Heart left ventricle (tissue), 16 donors: ENCODE measurements at regions of chr14 and their contacts with region 1.

Region 1: DNA sequence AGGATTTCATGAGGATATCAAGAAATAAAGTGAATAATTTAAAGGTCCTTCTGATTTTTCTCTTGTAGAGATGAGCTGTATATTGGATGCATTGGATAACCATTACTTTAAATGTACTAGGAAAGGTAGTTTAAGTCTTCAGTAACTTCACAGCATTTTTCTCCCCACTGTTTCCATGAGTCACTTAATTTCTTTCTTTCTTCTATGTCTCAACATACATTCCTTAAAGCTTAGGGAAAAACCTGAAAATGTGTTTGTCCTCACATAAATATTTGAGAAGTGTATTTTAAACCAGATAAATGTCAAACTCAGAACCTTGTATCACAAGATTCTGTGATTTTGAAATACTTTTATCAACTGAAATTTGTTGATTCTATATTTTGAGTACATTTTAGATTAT is 1970.2 kb upstream of the FLRT2 start:
- DNase-seq: no peak
- ATAC-seq: no peak
- H3K4me3 ChIP-seq: no peak overlapping the region
- H3K27ac ChIP-seq: no peak overlapping the region
- H3K4me1 ChIP-seq: no peaks in the 10 kb centered on the region
- H3K27me3 ChIP-seq: no peaks in the 10 kb centered on the region
- CTCF ChIP-seq: no peak
- POLR2A ChIP-seq: no peak

Region 2: GRCh38 chr14:83594874-83595273 is 35.2 kb after region 1 on chr14:
- intact Hi-C with region 1: loop called in 1 of 10 experiments (anchors 2 kb)
- DNase-seq: no peak
- ATAC-seq: no peak
- H3K4me3 ChIP-seq: no peak overlapping the region
- H3K27ac ChIP-seq: no peak overlapping the region
- H3K4me1 ChIP-seq: no peaks in the 10 kb centered on the region
- H3K27me3 ChIP-seq: no peaks in the 10 kb centered on the region
- CTCF ChIP-seq: no peak
- POLR2A ChIP-seq: no peak

Region 3: DNA sequence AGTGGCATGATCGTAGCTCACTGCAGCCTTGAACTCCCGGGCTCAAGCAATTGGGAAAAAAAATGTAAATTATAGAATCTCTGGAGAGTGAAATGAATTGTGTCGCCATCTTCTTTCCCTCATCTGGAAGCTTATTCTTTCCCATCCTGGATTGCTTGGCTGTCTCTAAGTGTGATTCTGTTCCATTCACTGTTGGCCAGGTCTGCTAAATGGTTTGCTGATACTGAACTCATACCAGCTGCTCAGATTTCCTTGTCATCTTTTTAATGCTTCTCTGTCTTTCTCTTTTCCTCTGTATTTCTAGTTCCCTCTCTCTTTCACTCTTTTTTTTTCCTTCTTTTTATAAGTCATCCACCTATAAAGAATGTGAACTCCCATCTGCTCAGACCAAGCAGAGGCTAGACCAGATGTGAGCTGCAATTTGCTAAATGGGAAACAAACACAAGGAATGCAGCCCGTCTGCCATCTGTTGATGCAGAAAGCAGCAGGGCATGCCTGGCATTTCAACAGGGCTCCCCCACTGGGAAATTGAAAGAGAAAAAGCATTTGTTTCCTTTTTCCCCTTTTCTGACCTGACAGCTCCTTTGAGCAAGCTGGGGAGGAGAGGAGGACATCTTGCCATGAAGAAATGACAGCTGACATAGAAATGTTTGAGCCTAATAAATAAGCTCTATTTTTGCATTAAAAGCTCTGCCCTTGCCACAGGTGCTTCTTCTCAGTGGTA is 146.7 kb after region 1 on chr14:
- intact Hi-C with region 1: no loop called
- DNase-seq: no peak
- ATAC-seq: no peak
- H3K4me3 ChIP-seq: no peak overlapping the region
- H3K27ac ChIP-seq: no peak overlapping the region
- H3K4me1 ChIP-seq: no peaks in the 10 kb centered on the region
- H3K27me3 ChIP-seq: no peaks in the 10 kb centered on the region
- CTCF ChIP-seq: no peak
- POLR2A ChIP-seq: no peak